Activated CD8-positive, alpha-beta T cell treated with anti-CD3 and anti-CD28 coated beads for 36 hours (primary cell): ENCODE measurements at regions of chr20 and their contacts with region 1.

Region 1: GRCh38 chr20:2101865-2102584 is 398 bp downstream of the STK35 start:
- DNase-seq: peak; percentile 92
- ATAC-seq: peak; percentile 84
- H3K4me3 Mint-ChIP-seq: peak overlapping the region; percentile 94
- H3K27ac Mint-ChIP-seq: peak overlapping the region; percentile 100
- H3K4me1 Mint-ChIP-seq: peaks cover 40% of the 10 kb centered on the region
- H3K27me3 Mint-ChIP-seq: no peaks in the 10 kb centered on the region
- CTCF ChIP-seq: no peak

Region 2: DNA sequence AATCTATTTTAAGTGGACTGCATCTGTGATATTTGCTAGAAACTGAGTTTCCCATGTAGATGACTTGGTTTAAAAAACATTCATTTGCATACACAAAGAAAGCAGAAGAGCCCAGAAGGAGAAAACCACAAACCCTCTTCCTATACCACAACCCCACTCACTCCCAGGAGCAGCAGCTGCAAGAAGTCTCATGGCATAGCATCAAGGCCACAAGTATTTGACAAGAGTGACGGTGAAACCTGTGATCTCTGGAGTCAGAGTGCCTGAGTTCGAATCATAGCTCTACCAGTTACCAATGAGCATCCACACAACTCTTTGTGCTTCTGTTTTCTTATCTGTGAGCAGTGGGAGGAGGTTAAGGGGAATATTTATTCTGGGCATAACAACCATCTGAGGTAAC is 399.7 kb before region 1 on chr20:
- CTCF ChIA-PET with region 1: no interaction called
- POLR2A ChIA-PET with region 1: no interaction called
- intact Hi-C with region 1: no loop called
- DNase-seq: no peak
- ATAC-seq: no peak
- H3K4me3 Mint-ChIP-seq: no peak overlapping the region
- H3K27ac Mint-ChIP-seq: no peak overlapping the region
- H3K4me1 Mint-ChIP-seq: peaks cover 6% of the 10 kb centered on the region
- H3K27me3 Mint-ChIP-seq: no peaks in the 10 kb centered on the region
- CTCF ChIP-seq: no peak

Region 3: GRCh38 chr20:2022163-2022562 is 79.9 kb before region 1 on chr20:
- CTCF ChIA-PET with region 1: no interaction called
- POLR2A ChIA-PET with region 1: no interaction called
- intact Hi-C with region 1: no loop called
- DNase-seq: no peak
- ATAC-seq: no peak
- H3K4me3 Mint-ChIP-seq: no peak overlapping the region
- H3K27ac Mint-ChIP-seq: no peak overlapping the region
- H3K4me1 Mint-ChIP-seq: no peaks in the 10 kb centered on the region
- H3K27me3 Mint-ChIP-seq: peaks cover 23% of the 10 kb centered on the region
- CTCF ChIP-seq: no peak

Region 4: DNA sequence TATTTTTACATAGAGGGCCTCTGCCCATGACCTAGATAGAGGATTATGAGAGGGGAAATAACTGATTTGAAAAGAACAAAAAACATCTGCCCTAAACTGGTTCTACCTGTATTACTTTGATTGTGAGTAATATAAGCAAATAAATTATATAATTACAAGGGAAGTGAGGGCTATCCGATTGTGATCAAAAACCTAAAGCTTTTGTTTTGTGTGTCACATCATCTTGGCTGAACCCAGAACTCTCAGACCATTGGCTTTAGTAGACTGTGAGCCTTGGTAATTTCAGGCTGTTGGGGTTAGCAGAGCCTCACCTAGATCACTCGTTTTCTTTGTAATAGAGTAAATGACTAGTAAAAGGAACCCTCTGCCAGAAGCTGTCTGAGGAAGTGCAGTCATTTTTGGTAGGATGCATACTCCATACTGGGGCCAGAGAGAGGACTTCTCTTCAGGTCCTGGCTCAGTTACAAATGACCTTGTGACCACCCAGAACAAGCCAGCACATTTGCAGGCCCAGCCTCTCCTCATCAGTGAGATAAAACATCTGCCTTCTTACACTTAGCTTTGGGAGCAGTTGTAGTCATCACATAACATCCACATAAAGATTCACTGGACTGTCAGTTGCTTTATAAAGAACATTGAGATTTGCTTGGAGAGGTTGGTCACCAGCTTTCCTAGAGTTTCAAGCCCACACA is 13.1 kb after region 1 on chr20:
- CTCF ChIA-PET with region 1: interaction called, 7 read pairs
- POLR2A ChIA-PET with region 1: interaction called, 33 read pairs
- intact Hi-C with region 1: no loop called
- DNase-seq: no peak
- ATAC-seq: no peak
- H3K4me3 Mint-ChIP-seq: no peak overlapping the region
- H3K27ac Mint-ChIP-seq: no peak overlapping the region
- H3K4me1 Mint-ChIP-seq: peaks cover 71% of the 10 kb centered on the region
- H3K27me3 Mint-ChIP-seq: no peaks in the 10 kb centered on the region
- CTCF ChIP-seq: no peak